Transverse colon (tissue), 4 donors: ENCODE measurements at regions of chr20 and their contacts with region 1.

Region 1: GRCh38 chr20:46767127-46767761 is 57.8 kb downstream of the SLC2A10 start:
- DNase-seq: peak; percentile 51
- H3K4me3 ChIP-seq: no peak overlapping the region
- H3K27ac ChIP-seq: no peak overlapping the region
- H3K4me1 ChIP-seq: no peaks in the 10 kb centered on the region
- H3K27me3 ChIP-seq: no peaks in the 10 kb centered on the region
- CTCF ChIP-seq: peak; percentile 56 to 67 (median 58)
- EP300 ChIP-seq: no peak
- POLR2A ChIP-seq: no peak

Region 2: DNA sequence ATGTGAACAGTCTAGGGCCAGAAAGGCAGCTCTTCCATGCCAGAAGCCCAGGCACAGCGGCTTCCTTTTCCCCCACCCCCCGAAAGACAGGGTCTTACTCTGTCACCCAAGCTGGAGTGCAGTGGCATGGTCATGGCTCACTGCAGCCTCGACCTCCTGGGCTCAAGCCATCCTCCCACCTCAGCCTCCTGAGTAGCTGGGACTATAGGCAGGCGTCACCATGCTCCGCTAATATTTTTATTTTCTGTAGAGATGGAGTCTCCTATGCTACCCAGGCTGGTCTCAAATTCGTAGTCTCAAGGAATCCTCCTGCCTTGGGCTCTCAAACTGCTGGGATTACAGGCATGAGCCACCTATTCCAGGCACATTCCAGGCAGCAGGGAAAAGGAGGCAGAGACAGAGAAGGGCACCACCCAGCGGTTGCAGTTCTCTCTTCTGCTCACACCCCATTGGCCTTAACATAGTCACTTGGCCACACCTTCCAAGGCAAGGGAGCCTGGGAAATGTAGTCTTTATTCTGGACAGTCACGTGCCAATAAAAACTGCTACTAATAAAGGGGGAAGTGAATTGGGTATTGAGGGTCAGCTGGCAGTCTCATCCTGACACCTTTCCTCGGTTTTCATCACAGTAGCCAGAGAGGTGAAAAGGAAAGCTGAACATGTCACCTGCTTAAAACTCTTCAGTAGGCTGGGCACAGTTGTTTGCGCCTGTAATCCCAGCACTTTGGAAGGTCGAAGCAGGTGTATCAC is 383.3 kb after region 1 on chr20:
- in situ Hi-C with region 1: loop called in 3 of 4 experiments (anchors 10 to 25 kb)
- intact Hi-C with region 1: no loop called
- DNase-seq: peak; percentile 66
- H3K4me3 ChIP-seq: no peak overlapping the region
- H3K27ac ChIP-seq: no peak overlapping the region
- H3K4me1 ChIP-seq: no peaks in the 10 kb centered on the region
- H3K27me3 ChIP-seq: no peaks in the 10 kb centered on the region
- CTCF ChIP-seq: peak; percentile 43 to 65 (median 54)
- EP300 ChIP-seq: no peak
- POLR2A ChIP-seq: no peak